ENCODE measurements at regions of chr19 and their contacts with region 1.

Region 1: DNA sequence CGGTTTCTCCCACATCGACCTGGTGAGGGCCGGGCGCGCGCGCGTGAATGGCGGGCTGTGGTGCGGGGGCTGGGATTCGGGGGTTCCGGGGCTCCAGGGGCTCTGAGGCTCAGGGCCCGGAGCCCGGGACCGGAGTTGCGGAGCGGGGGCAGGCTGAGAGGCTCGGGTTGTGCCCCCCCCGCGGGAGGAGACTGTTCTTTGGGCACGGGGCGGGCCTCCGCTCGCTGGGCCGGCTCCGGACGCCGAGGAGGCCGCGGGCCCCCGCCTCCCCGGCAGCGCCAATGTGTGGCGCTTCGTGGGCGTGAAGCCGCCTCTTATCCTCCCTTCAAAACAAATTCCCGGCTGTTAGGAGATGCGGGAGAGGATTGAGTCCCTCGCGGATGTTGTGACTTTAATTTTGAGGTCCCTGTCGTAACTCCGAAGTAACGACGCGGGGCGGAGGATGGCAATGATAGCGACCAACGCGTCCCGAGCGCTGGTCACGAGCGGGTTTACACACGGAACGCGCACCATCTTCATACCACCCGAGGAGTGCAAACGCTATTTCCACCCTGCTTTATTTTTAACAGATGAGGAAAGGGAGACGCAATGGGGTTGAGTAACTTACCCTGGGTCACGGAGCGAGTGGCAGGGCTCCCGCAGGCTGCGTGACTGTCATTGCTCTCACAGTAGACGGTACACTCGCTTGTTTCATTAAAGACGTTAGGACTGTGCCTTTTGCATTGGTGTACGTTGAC is 536 bp downstream of the UBA2 start:
- DNase-seq: peak; percentile 10 to 58 (median 46)
- ATAC-seq: peak; percentile 16 to 76 (median 66)
- H3K4me3 ChIP-seq: peak overlapping the region; percentile 72 to 97 (median 90)
- H3K27ac ChIP-seq: peak overlapping the region; percentile 85 to 98 (median 92)
- H3K4me1 ChIP-seq: peaks cover 0 to 52% (median 39%) of the 10 kb centered on the region in 12 donors
- H3K27me3 ChIP-seq: no peaks in the 10 kb centered on the region
- CTCF ChIP-seq: no peak
- POLR2A ChIP-seq: no peak

Region 2: GRCh38 chr19:34359140-34359953 is 69.4 kb before region 1 on chr19:
- intact Hi-C with region 1: loop called in 2 of 10 experiments (anchors 2 kb)
- DNase-seq: peak; percentile 94 to 98 (median 98)
- ATAC-seq: peak; percentile 96 to 97 (median 96)
- H3K4me3 ChIP-seq: peak overlapping the region; percentile 18 to 69 (median 54)
- H3K27ac ChIP-seq: peak overlapping the region; percentile 64 to 93 (median 84)
- H3K4me1 ChIP-seq: peaks cover 0 to 15% (median 9%) of the 10 kb centered on the region in 12 donors
- H3K27me3 ChIP-seq: no peaks in the 10 kb centered on the region
- CTCF ChIP-seq: peak; percentile 29 to 81 (median 55)
- POLR2A ChIP-seq: peak in 1 of 2 donors; percentile 69

Region 3: GRCh38 chr19:34364830-34365462 is 63.8 kb before region 1 on chr19 and contains the start of gene GPI:
- intact Hi-C with region 1: loop called in 1 of 10 experiments (anchors 2 kb)
- DNase-seq: peak; percentile 63 to 84 (median 75)
- ATAC-seq: peak; percentile 28 to 88 (median 76)
- H3K4me3 ChIP-seq: peak within 1 kb of the TSS; percentile 85 to 99 (median 94)
- H3K27ac ChIP-seq: peak within 1 kb of the TSS; percentile 80 to 97 (median 92)
- H3K4me1 ChIP-seq: peaks cover 14 to 48% (median 31%) of the 10 kb centered on the region in 12 donors
- H3K27me3 ChIP-seq: no peaks in the 10 kb centered on the region
- CTCF ChIP-seq: no peak
- POLR2A ChIP-seq: peak in 1 of 2 donors; percentile 54
- total RNA-seq, gene GPI: 359 to 764 (median 549) TPM

Region 4: DNA sequence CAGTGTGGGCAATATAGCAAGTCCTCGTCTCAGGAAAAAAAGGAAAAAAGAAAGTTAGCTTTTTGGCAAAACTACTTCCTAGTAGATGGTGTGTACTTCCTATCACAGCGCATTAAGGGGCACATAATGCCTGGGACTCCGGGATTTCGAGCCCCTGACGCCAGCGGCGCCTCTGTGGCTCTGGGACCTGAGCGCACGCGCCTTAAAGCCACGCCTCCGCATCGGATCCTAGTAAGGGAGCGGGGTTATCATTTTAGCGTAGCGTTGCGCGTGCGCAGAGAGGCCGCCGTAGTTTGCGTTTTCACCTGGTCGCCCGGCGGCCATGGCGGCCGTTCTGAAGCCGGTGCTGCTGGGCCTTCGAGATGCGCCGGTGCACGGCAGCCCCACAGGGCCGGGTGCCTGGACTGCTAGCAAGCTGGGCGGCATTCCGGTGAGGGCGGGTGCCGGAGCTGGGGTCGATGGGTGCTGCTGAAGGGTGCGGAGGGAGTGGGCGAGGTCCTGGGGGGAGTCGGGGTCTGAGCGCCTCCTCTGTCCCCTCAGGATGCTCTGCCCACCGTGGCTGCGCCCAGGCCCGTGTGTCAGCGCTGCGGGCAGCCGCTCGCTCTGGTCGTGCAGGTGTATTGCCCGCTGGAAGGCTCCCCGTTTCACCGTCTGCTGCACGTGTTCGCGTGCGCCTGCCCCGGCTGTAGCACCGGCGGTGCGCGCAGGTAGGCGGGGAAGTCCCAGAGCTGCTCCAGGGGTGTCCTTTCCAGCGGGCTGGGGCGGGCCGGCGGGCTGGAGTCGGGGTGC is 24.4 kb before region 1 on chr19 and contains the start of gene PDCD2L:
- intact Hi-C with region 1: loop called in 1 of 10 experiments (anchors 2 kb)
- DNase-seq: peak; percentile 90 to 96 (median 94)
- ATAC-seq: peak; percentile 76 to 95 (median 92)
- H3K4me3 ChIP-seq: peak within 1 kb of the TSS; percentile 70 to 96 (median 89)
- H3K27ac ChIP-seq: peak within 1 kb of the TSS in 10 of 12 donors; percentile 4 to 76 (median 44)
- H3K4me1 ChIP-seq: peaks cover 0 to 11% (median 5%) of the 10 kb centered on the region in 12 donors
- H3K27me3 ChIP-seq: no peaks in the 10 kb centered on the region
- CTCF ChIP-seq: no peak
- POLR2A ChIP-seq: peak in 1 of 2 donors; percentile 64
- total RNA-seq, gene PDCD2L: 6.2 to 16.7 (median 8.0) TPM

Region 5: GRCh38 chr19:34461375-34462100 is 32.8 kb after region 1 on chr19:
- intact Hi-C with region 1: no loop called
- DNase-seq: no peak
- ATAC-seq: peak; percentile 81 to 91 (median 86)
- H3K4me3 ChIP-seq: no peak overlapping the region
- H3K27ac ChIP-seq: peak overlapping the region; percentile 20 to 89 (median 67)
- H3K4me1 ChIP-seq: peaks cover 0 to 50% (median 32%) of the 10 kb centered on the region in 12 donors
- H3K27me3 ChIP-seq: no peaks in the 10 kb centered on the region
- CTCF ChIP-seq: no peak
- POLR2A ChIP-seq: no peak

Region 6: GRCh38 chr19:34501339-34502320 is 72.9 kb after region 1 on chr19:
- intact Hi-C with region 1: loop called in 1 of 10 experiments (anchors 5 kb)
- DNase-seq: peak; percentile 90 to 96 (median 94)
- ATAC-seq: peak; percentile 83 to 90 (median 86)
- H3K4me3 ChIP-seq: peak overlapping the region in 1 of 12 donors; percentile 11
- H3K27ac ChIP-seq: peak overlapping the region in 6 of 12 donors; percentile 3 to 56 (median 26)
- H3K4me1 ChIP-seq: peaks cover 0 to 39% (median 10%) of the 10 kb centered on the region in 12 donors
- H3K27me3 ChIP-seq: peaks cover 0 to 5% (median 0%) of the 10 kb centered on the region in 9 donors
- CTCF ChIP-seq: peak; percentile 98 to 99 (median 99)
- POLR2A ChIP-seq: no peak

Measured in heart left ventricle (tissue), 16 donors.